ENCODE measurements at regions of chr5 and their contacts with region 1.

Region 1: GRCh38 chr5:40679155-40679913 is 381 bp upstream of the PTGER4 start:
- DNase-seq: peak; percentile 90
- H3K4me3 Mint-ChIP-seq: peak overlapping the region; percentile 99
- H3K27ac Mint-ChIP-seq: peak overlapping the region; percentile 98
- H3K4me1 Mint-ChIP-seq: peaks cover 51% of the 10 kb centered on the region
- H3K27me3 Mint-ChIP-seq: no peaks in the 10 kb centered on the region

Region 2: GRCh38 chr5:40165794-40166728 is 513.3 kb before region 1 on chr5:
- intact Hi-C with region 1: loop called (anchors 2 kb)
- DNase-seq: no peak
- H3K4me3 Mint-ChIP-seq: no peak overlapping the region
- H3K27ac Mint-ChIP-seq: no peak overlapping the region
- H3K4me1 Mint-ChIP-seq: peaks cover 10% of the 10 kb centered on the region
- H3K27me3 Mint-ChIP-seq: no peaks in the 10 kb centered on the region

Region 3: GRCh38 chr5:40410231-40410861 is 269.0 kb before region 1 on chr5:
- intact Hi-C with region 1: loop called (anchors 1 kb)
- DNase-seq: peak; percentile 65
- H3K4me3 Mint-ChIP-seq: peak overlapping the region; percentile 66
- H3K27ac Mint-ChIP-seq: peak overlapping the region; percentile 90
- H3K4me1 Mint-ChIP-seq: peaks cover 58% of the 10 kb centered on the region
- H3K27me3 Mint-ChIP-seq: no peaks in the 10 kb centered on the region

Region 4: DNA sequence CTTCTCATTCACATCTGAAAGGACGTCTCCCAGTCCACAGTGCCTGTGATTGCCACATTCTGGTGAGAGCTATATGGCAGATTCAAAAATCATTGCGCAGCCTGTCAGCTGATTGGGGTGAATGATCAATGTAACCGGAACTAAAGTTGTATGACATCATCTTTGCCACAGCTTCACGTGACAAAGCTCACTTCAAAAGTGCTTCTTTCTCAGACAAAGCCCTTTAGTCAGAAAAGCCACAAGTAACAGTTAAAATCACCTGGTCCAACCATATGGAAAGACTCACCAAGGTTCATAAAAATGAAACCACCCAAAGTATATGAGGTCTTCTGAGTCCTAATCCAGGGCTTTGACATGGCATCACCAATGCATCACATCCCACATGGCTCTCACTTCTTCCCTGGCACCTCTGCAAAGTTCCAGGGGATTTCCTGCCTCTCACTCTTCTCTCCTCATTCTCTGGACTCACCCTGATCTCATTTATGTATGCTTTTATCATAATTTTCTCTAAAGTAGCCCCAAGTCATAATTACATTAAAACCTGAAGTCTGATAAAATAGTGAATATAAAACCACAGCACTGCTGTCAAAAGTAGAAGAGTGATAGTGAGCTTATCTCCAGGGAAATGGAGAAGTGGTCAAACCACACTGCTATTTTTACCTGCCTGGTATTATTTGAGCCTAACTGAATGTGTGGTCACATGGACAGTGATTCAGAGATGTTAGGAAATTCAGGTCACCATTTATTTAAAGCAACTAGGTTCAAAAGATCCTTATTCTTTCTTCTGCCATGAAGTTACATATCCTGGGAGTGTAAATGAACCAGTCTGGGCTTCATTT is 192.7 kb before region 1 on chr5:
- intact Hi-C with region 1: loop called (anchors 1 kb)
- DNase-seq: peak; percentile 64
- H3K4me3 Mint-ChIP-seq: peak overlapping the region; percentile 19
- H3K27ac Mint-ChIP-seq: peak overlapping the region; percentile 75
- H3K4me1 Mint-ChIP-seq: peaks cover 78% of the 10 kb centered on the region
- H3K27me3 Mint-ChIP-seq: no peaks in the 10 kb centered on the region

Region 5: GRCh38 chr5:40646286-40646685 is 33.0 kb before region 1 on chr5:
- intact Hi-C with region 1: loop called (anchors 1 kb)
- DNase-seq: no peak
- H3K4me3 Mint-ChIP-seq: no peak overlapping the region
- H3K27ac Mint-ChIP-seq: no peak overlapping the region
- H3K4me1 Mint-ChIP-seq: peaks cover 31% of the 10 kb centered on the region
- H3K27me3 Mint-ChIP-seq: no peaks in the 10 kb centered on the region

Region 6: GRCh38 chr5:40716000-40716399 is 36.7 kb after region 1 on chr5:
- intact Hi-C with region 1: no loop called
- DNase-seq: no peak
- H3K4me3 Mint-ChIP-seq: no peak overlapping the region
- H3K27ac Mint-ChIP-seq: no peak overlapping the region
- H3K4me1 Mint-ChIP-seq: peaks cover 6% of the 10 kb centered on the region
- H3K27me3 Mint-ChIP-seq: no peaks in the 10 kb centered on the region

Region 7: DNA sequence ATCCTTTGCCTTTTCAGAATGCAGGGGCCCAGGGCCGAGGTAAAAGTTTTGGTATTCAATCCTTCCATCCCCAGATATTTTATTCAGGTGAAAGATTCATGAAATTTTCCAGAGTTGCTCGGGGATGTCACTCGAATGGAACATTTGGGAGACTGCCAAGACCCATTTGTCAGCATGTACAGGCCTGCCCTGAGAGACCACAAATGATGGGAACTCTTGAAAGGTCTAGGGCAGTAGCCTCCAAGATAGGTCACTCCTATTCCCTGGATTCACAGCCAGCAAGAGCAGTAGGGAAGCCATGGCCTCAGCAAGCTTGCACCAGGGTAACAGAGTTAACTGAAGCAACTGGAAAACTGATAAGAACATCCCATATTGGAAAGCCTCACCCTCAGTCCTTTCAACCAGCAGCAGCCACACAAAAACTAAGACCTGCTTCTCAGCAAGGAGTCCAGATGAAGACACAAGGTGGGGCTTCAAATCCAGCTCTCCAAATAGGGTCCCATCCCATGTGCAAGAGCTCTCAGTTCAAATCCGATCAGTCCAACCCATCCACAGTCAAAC is 174.4 kb after region 1 on chr5:
- intact Hi-C with region 1: no loop called
- DNase-seq: no peak
- H3K4me3 Mint-ChIP-seq: no peak overlapping the region
- H3K27ac Mint-ChIP-seq: no peak overlapping the region
- H3K4me1 Mint-ChIP-seq: no peaks in the 10 kb centered on the region
- H3K27me3 Mint-ChIP-seq: peaks cover 2% of the 10 kb centered on the region

Measured in activated T-helper 2 cell treated with anti-CD3 and anti-CD28 coated beads, Interferon-gamma antibody, Interleukin-2, Interleukin-4, amounts not matched to agents 10 μg/mL and 5 μg/mL and 100 μg/mL, durations not matched to agents 14 hours and 24 hours and 36 hours (primary cell).